Stomach (tissue), 19 donors: ENCODE measurements at regions of chr16 and their contacts with region 1.

Region 1: DNA sequence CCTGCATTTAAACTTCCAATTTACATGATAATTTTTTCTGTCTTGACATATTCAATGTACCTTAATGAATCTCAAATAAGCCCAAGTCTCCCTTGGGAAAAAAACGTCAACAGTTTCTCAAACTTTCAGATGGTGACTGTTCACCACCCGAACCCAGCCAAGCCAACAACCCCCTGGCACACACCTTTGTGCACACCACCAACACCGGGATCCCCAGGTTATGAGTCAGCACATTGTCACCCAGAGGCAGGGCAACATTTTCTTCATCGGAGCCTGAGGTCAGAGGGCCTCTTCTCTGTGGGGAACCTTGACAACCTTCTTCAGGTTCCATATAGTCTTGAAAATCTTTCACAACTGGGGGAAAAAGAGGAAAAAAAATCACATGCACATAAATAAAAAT is 15.5 kb downstream of the DYNC1LI2 start:
- DNase-seq: no peak
- H3K4me3 ChIP-seq: no peak overlapping the region
- H3K27ac ChIP-seq: no peak overlapping the region
- H3K4me1 ChIP-seq: peaks cover 8 to 34% (median 17%) of the 10 kb centered on the region in 4 donors
- H3K27me3 ChIP-seq: no peaks in the 10 kb centered on the region
- CTCF ChIP-seq: no peak
- EP300 ChIP-seq: no peak
- POLR2A ChIP-seq: no peak

Region 2: GRCh38 chr16:66859397-66860068 is 123.6 kb after region 1 on chr16:
- intact Hi-C with region 1: loop called (anchors 10 kb)
- DNase-seq: no peak
- H3K4me3 ChIP-seq: no peak overlapping the region
- H3K27ac ChIP-seq: no peak overlapping the region
- H3K4me1 ChIP-seq: peaks cover 0 to 7% (median 0%) of the 10 kb centered on the region in 4 donors
- H3K27me3 ChIP-seq: no peaks in the 10 kb centered on the region
- CTCF ChIP-seq: no peak
- EP300 ChIP-seq: no peak
- POLR2A ChIP-seq: no peak